Activated B cell treated with CpG ODN at 0.5 μM for 24 hours (primary cell): ENCODE measurements at regions of chr2 and their contacts with region 1.

Region 1: DNA sequence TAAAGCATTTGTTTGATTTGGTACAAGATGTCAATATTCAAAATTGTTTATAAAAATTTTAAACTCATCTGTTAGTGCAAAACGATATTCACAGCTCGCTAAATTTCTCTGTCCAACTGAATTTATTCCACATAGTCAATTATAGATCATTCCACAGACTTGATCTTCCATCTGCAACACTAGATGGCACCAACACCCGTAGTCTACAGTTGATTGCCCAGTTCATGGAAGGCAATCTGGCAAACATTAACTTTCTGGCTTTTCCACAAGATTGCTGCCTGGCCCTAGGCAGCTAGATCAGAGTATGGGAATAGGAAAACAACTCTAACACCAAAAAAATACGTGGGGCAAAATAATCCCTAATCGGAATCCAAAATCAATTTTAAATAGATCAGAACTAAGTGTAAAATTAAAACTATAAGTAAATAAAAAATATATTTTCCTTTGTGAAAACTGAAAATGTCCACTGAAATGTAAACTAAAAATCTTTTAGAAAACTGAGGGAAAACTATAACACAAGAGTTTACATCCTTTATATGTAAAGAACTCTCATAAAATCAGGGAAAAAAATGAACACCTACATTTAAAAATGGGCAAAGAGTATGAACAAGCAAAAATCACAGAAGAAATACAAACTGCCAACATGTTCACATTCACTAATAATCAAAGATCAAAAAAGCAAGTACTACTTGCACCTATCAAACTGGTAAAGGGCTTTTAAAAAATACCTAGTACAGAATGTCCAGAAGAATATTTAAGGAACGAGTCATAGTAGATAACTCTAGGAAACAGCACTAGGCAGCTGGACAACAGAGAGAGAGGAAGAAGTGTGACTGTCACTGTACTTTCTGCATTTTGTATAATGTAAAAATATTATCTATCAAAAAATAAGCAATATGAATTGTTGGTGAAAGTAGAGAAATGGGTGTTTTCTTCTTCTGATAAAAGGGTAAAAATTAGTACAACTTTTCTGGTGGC is 35.0 kb downstream of the RTN4 start:
- DNase-seq: no peak
- ATAC-seq: no peak
- H3K4me3 Mint-ChIP-seq: no peak overlapping the region
- H3K27ac Mint-ChIP-seq: no peak overlapping the region
- H3K4me1 Mint-ChIP-seq: peaks cover 52% of the 10 kb centered on the region
- H3K27me3 Mint-ChIP-seq: no peaks in the 10 kb centered on the region
- CTCF ChIP-seq: peak; percentile 49

Region 2: GRCh38 chr2:53473248-53473647 is 1542.0 kb before region 1 on chr2:
- CTCF ChIA-PET with region 1: no interaction called
- POLR2A ChIA-PET with region 1: no interaction called
- intact Hi-C with region 1: no loop called
- DNase-seq: no peak
- ATAC-seq: no peak
- H3K4me3 Mint-ChIP-seq: no peak overlapping the region
- H3K27ac Mint-ChIP-seq: no peak overlapping the region
- H3K4me1 Mint-ChIP-seq: no peaks in the 10 kb centered on the region
- H3K27me3 Mint-ChIP-seq: peaks cover 1% of the 10 kb centered on the region
- CTCF ChIP-seq: no peak

Region 3: DNA sequence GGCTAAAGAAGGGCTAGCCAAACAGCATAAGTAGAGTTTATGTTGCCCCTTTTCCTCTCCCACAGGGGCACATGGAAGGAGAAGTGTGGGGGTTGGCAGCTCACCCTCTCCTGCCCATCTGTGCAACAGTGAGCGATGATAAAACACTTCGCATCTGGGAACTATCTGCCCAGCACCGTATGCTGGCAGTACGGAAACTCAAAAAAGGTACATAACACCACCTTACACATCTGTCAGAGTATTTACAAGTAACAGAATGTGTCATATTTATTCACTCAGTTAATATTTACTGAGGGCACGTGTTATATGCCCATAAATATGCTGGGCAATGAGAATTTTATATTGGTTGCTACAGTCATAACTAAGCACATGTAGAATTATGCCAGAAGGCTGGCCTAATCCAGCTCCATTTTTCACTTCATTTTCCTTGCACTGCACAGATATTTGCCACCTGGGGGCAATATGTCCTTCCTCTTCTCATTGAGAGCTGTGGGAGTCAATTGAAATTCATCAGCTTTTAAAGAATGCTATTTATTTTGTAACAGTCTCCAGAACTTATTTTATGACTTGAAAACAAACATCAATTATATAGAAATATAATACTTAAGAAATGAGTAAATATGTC is 115.6 kb before region 1 on chr2:
- CTCF ChIA-PET with region 1: no interaction called
- POLR2A ChIA-PET with region 1: no interaction called
- intact Hi-C with region 1: loop called (anchors 5 kb)
- DNase-seq: no peak
- ATAC-seq: no peak
- H3K4me3 Mint-ChIP-seq: no peak overlapping the region
- H3K27ac Mint-ChIP-seq: no peak overlapping the region
- H3K4me1 Mint-ChIP-seq: no peaks in the 10 kb centered on the region
- H3K27me3 Mint-ChIP-seq: no peaks in the 10 kb centered on the region
- CTCF ChIP-seq: no peak

Region 4: DNA sequence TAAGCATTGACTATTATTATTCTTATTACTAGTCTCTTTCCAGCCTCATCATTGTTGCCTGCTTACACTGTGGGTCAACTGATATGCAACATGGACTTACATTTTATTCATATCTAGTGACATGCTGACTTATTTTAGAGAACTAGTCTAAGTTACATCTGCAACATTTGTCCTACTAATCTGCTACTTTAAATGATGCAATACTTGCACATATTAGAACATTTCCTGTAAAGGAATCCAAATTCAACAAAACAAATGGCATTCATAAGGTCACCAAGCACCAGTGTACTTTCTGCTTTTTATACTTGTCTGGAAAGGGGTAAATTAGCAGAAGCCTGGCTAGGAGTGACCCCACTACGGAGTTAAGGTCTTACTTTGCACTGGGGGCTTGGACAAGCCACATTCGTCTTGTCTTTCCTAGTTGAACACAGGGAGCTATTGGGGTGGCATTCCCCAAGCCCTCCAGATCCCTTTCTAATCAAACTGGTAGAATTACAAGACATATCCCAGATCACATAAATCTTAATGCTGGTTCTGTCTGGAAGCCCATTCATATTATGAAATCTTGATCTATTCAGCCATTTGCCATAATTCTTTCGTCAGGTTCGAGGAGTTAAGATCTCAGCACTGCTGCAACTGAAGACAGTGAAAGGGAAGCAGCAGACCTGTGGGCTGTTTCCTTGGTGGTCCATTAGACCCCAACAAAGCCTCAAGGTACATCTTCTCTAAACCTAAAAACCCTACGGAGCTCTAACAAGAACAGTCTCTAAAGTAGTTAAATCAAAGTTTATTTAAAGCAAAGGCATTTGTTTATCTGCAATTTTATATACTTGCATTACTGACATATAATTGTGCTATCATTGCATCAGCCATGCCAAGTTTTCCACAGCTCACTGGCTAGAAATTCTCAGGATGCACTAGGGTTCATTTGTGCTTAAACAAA is 84.9 kb after region 1 on chr2:
- CTCF ChIA-PET with region 1: no interaction called
- POLR2A ChIA-PET with region 1: no interaction called
- intact Hi-C with region 1: no loop called
- DNase-seq: no peak
- ATAC-seq: no peak
- H3K4me3 Mint-ChIP-seq: no peak overlapping the region
- H3K27ac Mint-ChIP-seq: no peak overlapping the region
- H3K4me1 Mint-ChIP-seq: peaks cover 6% of the 10 kb centered on the region
- H3K27me3 Mint-ChIP-seq: no peaks in the 10 kb centered on the region
- CTCF ChIP-seq: no peak

Region 5: DNA sequence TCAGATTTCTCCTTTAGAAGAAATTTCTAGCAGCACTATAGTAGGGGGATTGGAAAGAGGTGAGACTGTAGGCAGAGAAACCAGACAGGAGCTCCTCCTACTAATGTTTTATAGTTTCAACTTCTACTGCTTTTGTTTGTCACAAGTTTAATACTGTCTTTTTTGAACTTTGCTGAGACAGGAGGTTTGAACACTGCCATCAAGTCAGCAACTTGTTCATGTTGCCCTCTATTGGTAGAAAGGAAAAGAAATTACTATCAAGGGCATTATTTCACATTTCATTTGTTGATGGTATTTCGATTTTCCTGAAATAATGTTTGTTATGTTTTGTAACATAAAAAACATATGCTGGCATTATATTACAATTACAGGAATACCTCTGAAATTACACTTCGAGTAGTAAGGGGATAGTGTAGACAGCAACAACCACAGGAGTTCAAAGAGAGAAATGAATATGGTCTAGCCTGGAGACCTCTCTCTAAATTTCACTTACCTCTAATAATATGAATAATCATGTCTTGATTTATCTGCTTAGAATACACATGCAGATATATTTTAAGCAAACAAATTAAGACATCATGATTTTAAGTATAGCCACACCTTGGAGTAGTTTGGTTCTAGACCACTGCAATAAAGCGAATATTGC is 416.9 kb after region 1 on chr2:
- CTCF ChIA-PET with region 1: no interaction called
- POLR2A ChIA-PET with region 1: no interaction called
- intact Hi-C with region 1: loop called (anchors 1 kb)
- DNase-seq: no peak
- ATAC-seq: no peak
- H3K4me3 Mint-ChIP-seq: no peak overlapping the region
- H3K27ac Mint-ChIP-seq: no peak overlapping the region
- H3K4me1 Mint-ChIP-seq: no peaks in the 10 kb centered on the region
- H3K27me3 Mint-ChIP-seq: no peaks in the 10 kb centered on the region
- CTCF ChIP-seq: no peak